ENCODE measurements at regions of chr22 and their contacts with region 1.

Region 1: DNA sequence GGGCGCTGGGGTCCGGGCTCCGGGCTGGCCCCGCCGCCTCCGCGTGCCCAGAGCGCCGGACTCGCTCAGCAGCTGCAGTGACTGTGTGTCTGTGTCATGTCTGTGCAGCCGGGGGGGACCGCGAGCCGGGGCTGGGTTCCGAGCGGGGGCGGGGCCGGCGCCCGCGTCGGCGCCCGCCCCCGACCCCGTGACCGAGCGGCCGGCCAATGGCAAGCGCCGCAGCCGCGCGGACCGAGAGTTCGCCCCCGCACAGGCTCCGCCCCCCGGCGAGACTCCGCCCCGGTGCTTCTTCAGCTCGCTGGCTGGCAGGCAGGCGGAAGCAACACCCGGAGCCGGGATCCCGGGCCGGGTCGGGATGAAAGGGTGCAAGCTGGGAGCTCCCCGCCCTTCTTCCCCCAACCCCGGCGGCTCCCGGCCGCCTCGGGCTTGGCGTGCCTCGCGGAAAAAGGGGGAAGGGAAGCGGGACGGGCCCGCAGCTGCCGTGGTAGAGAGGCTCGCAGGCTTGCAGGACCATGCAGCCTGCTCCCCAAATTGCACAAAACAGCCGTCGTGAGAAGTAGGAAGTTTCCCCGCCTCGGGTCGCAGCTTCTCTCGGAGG is 750 bp upstream of the LARGE1 start:
- DNase-seq: peak in 1 of 2 donors; percentile 98
- H3K4me3 ChIP-seq: peak overlapping the region; percentile 79 to 84
- H3K27ac ChIP-seq: peak overlapping the region; percentile 93
- H3K4me1 ChIP-seq: peaks cover 41% of the 10 kb centered on the region
- H3K27me3 ChIP-seq: no peaks in the 10 kb centered on the region
- CTCF ChIP-seq: no peak
- POLR2A ChIP-seq: peak in 1 of 2 donors; percentile 90

Region 2: DNA sequence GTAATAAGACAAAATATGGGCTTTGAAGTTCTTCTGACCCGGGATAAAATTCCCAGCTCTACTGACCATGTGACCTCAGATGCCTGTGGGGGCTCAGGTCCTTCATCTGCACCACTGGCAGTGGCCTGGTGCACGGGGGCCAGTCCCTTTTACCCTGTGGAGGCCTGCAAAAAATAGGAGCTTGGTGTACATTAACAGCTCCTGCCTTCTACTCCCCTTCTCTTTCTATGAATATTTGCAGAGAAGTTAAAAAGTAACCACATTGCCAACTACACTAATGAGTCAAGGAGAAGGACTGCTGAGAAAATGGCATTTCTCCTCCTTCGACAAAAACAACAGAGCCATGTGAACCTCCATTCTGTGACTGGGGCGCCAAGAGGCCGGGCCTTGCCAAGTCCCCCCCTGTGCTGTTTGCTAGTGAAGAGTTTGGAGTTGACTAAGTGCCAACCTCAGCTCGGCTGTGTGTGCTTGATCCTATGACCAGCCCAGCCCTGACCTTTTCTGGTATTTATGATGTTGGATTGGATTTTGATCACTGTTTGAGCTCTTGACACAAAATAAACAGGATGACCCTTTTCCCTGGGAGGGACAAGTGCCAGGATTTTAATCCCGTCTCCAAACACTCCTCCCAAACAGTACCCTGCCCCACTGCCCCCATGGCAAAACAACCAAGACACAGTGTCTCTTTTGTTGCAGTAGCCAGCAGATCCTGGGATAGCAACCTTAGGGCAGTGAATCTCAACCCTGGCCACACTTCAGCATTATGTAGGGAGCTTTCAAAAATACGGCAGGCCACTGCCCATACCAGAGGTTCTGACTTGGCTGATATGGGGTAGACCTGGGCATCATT is 380.9 kb before region 1 on chr22:
- intact Hi-C with region 1: loop called (anchors 10 kb)
- DNase-seq: no peak
- H3K4me3 ChIP-seq: no peak overlapping the region
- H3K27ac ChIP-seq: peak overlapping the region; percentile 53
- H3K4me1 ChIP-seq: peaks cover 63% of the 10 kb centered on the region
- H3K27me3 ChIP-seq: no peaks in the 10 kb centered on the region
- CTCF ChIP-seq: no peak
- POLR2A ChIP-seq: no peak

Region 3: DNA sequence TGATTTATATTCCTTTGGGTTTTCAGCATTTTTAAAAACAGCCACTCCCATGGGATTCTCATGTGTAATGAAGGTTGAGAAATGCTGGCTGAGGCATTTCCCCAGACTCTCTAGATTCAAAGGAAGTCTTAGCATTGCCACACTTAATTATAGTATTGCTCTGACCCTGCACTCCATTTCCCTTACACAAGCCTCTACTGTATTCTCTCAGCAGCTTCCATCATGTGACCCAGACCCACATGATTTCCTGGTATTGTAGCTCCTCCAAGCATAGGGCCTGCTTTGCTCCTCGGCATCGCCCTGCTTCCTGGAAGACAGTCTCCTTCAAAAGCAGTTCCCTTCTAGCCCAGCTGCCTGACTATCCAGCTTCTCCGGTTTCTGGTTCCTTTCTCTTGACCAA is 262.3 kb before region 1 on chr22:
- intact Hi-C with region 1: loop called (anchors 2 kb)
- DNase-seq: peak in 1 of 2 donors; percentile 92
- H3K4me3 ChIP-seq: no peak overlapping the region
- H3K27ac ChIP-seq: peak overlapping the region; percentile 53
- H3K4me1 ChIP-seq: peaks cover 30% of the 10 kb centered on the region
- H3K27me3 ChIP-seq: no peaks in the 10 kb centered on the region
- CTCF ChIP-seq: no peak
- POLR2A ChIP-seq: no peak

Region 4: GRCh38 chr22:33796494-33796893 is 124.5 kb before region 1 on chr22:
- intact Hi-C with region 1: loop called (anchors 5 kb)
- DNase-seq: no peak
- H3K4me3 ChIP-seq: no peak overlapping the region
- H3K27ac ChIP-seq: no peak overlapping the region
- H3K4me1 ChIP-seq: peaks cover 7% of the 10 kb centered on the region
- H3K27me3 ChIP-seq: no peaks in the 10 kb centered on the region
- CTCF ChIP-seq: no peak
- POLR2A ChIP-seq: no peak